PC-3 (cell line): ENCODE measurements at regions of chr14 and their contacts with region 1.

Region 1: GRCh38 chr14:65446159-65446558 is 33.6 kb downstream of the FUT8 start:
- DNase-seq: no peak
- ATAC-seq: no peak
- H3K4me3 ChIP-seq: no peak overlapping the region
- H3K27ac ChIP-seq: no peak overlapping the region
- H3K4me1 ChIP-seq: peaks cover 11% of the 10 kb centered on the region
- H3K27me3 ChIP-seq: no peaks in the 10 kb centered on the region
- CTCF ChIP-seq: no peak

Region 2: GRCh38 chr14:65336191-65336591 is 110.0 kb before region 1 on chr14:
- CTCF ChIA-PET with region 1: no interaction called
- POLR2A ChIA-PET with region 1: no interaction called
- intact Hi-C with region 1: no loop called
- DNase-seq: peak; percentile 29
- ATAC-seq: no peak
- H3K4me3 ChIP-seq: no peak overlapping the region
- H3K27ac ChIP-seq: 0 out of 2 replicates have a peak overlapping the region, but pooled peaks have one; percentile 7
- H3K4me1 ChIP-seq: peaks cover 38% of the 10 kb centered on the region
- H3K27me3 ChIP-seq: no peaks in the 10 kb centered on the region
- CTCF ChIP-seq: no peak

Region 3: DNA sequence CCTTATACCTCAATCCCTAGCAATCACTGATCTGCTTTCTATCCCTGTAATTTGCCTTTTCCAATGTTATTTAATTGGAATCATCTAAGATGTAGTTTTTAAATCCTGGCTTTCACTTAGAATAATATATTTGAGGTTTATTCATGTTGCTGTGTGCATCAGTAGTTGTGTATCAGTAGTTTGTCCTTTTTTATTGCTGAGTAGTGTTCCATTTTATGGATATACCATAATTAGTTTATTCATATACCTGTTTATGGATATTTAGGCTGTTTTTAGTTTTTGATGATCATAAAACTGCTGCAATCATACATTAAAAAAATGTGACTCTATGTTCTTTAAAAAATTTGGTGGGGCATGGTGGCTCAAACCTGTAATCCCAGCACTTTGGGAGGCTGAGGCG is 10.1 kb after region 1 on chr14:
- CTCF ChIA-PET with region 1: no interaction called
- POLR2A ChIA-PET with region 1: interaction called, 12 read pairs
- intact Hi-C with region 1: no loop called
- DNase-seq: no peak
- ATAC-seq: no peak
- H3K4me3 ChIP-seq: no peak overlapping the region
- H3K27ac ChIP-seq: no peak overlapping the region
- H3K4me1 ChIP-seq: no peaks in the 10 kb centered on the region; the same call in 1 of the 2 replicates
- H3K27me3 ChIP-seq: no peaks in the 10 kb centered on the region
- CTCF ChIP-seq: no peak

Region 4: GRCh38 chr14:65478596-65478995 is 32.4 kb after region 1 on chr14:
- CTCF ChIA-PET with region 1: no interaction called
- POLR2A ChIA-PET with region 1: interaction called, 10 read pairs
- intact Hi-C with region 1: no loop called
- DNase-seq: peak; percentile 38
- ATAC-seq: peak; percentile 86
- H3K4me3 ChIP-seq: no peak overlapping the region
- H3K27ac ChIP-seq: no peak overlapping the region
- H3K4me1 ChIP-seq: peaks cover 23% of the 10 kb centered on the region; the same call in 1 of the 2 replicates
- H3K27me3 ChIP-seq: no peaks in the 10 kb centered on the region
- CTCF ChIP-seq: no peak